ENCODE measurements at regions of chr15 and their contacts with region 1.

Region 1: GRCh38 chr15:84658080-84658787 is at the start of gene NMB:
- DNase-seq: peak; percentile 68 to 93 (median 83)
- ATAC-seq: peak; percentile 66
- H3K4me3 ChIP-seq: peak within 1 kb of the TSS; percentile 58 to 60
- H3K4me3 Mint-ChIP-seq: peak within 1 kb of the TSS; percentile 80
- H3K27ac ChIP-seq: peak within 1 kb of the TSS; percentile 39 to 75
- H3K27ac Mint-ChIP-seq: peak within 1 kb of the TSS; percentile 72
- H3K4me1 ChIP-seq: peaks cover 24% of the 10 kb centered on the region
- H3K4me1 Mint-ChIP-seq: peaks cover 33% of the 10 kb centered on the region
- H3K27me3 ChIP-seq: no peaks in the 10 kb centered on the region
- H3K27me3 Mint-ChIP-seq: no peaks in the 10 kb centered on the region
- CTCF ChIP-seq: peak; percentile 70
- total RNA-seq, gene NMB: 1.8 to 2.0 TPM

Region 2: DNA sequence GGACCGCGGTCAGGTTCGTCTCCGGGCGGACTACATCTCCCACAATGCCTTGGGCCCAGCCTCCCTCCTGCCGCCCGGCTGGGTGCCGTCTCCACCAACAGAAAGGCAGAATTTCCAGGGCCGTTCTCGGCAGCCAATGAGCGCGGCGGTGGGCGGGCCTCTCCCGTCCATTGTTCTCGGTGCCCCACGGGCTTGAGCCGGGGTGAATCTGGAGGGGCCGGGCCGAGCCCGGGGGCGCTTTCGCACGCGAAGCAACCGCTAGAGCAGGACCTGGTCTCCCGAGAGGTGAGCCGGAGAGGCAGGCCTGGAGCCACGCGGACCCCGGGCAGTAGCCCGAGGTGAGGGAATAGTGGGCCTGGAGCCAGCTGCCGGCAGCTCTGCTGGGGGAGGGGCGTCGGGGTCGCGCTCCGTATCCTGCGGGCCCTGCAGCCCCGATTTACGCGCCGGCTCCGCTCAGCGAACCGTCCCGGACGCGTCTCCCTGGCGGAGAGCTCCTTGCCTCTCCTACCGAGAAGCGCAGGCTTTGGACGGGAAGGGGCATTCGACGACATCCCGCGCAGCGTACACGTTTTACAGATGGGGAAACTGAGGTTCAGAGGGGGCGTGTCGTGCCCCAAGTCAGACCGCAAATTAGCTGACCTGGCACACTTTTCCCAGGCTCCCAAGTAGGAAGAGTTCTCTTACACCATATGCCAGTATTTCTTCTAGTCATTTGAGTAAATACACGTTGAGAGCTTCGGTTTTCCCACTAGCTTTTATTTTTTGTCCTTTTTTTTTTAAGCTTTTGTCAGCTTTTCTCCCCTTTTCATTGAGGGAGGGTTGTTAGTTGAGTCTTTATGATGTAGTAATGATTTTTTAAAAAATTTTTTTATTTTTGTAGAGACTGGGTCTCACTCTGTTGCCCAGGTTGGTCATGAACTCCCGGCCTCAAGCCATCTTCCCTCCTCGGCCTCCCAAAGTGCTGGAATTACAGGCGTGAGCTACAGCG is 57.1 kb before region 1 on chr15 and contains the start of gene ZSCAN2:
- CTCF ChIA-PET with region 1: interaction called, 19 read pairs
- POLR2A ChIA-PET with region 1: interaction called, 12 read pairs
- intact Hi-C with region 1: loop called (anchors 1 kb)
- DNase-seq: peak; percentile 81 to 95 (median 92)
- ATAC-seq: peak; percentile 95
- H3K4me3 ChIP-seq: peak within 1 kb of the TSS; percentile 93 to 100
- H3K4me3 Mint-ChIP-seq: peak within 1 kb of the TSS; percentile 99
- H3K27ac ChIP-seq: peak within 1 kb of the TSS; percentile 34 to 58
- H3K27ac Mint-ChIP-seq: peak within 1 kb of the TSS; percentile 93
- H3K4me1 ChIP-seq: peaks cover 42% of the 10 kb centered on the region
- H3K4me1 Mint-ChIP-seq: peaks cover 74% of the 10 kb centered on the region
- H3K27me3 ChIP-seq: no peaks in the 10 kb centered on the region
- H3K27me3 Mint-ChIP-seq: no peaks in the 10 kb centered on the region
- CTCF ChIP-seq: no peak
- total RNA-seq, gene ZSCAN2: 2.7 to 4.4 TPM

Region 3: DNA sequence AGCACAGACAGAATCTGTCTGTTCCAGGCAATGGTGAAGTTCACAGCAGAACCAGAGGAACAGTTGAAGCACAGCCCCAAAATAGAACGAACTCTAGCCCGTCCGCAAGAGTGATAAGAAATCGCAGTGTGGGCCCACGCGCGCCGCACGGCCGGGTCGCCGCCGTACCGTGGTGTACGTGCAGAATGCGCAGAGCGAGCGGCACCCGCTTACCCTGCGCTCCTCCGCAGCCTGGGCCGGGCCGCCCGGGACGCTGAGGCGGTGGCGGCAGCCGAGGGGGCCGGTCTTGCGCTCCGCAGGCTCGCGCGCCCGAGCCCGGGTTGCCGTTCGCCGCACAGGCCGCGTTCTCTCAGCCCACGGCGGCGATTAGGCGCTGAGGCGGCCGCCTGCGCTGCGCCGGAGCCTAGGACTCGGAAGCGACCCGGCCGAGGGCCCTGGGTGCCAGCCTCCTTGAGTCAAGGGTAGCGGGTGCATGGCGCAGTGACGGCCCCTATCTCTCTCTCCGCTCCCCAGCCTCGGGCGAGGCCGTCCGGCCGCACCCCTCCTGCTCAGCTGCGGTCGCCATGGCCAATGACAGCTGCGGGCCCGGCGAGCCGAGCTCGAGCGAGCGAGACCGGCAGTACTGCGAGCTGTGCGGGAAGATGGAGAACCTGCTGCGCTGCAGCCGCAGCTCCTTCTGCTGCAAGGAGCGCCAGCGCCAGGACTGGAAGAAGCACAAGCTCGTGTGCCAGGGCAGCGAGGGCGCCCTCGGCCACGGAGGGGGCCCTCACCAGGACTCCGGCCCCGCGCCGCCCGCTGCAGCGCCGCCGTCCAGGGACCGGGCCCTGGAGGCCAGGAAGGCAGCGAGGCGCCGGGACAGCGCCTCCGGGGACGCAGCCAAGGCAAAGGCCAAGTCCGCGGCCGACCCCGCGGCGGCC is 24.7 kb before region 1 on chr15:
- CTCF ChIA-PET with region 1: interaction called, 9 read pairs
- POLR2A ChIA-PET with region 1: interaction called, 20 read pairs
- intact Hi-C with region 1: loop called (anchors 1 kb)
- DNase-seq: peak; percentile 29 to 84 (median 63)
- ATAC-seq: peak; percentile 41
- H3K4me3 ChIP-seq: peak overlapping the region; percentile 63 to 77
- H3K4me3 Mint-ChIP-seq: peak overlapping the region; percentile 93
- H3K27ac ChIP-seq: peak overlapping the region; percentile 51 to 74
- H3K27ac Mint-ChIP-seq: peak overlapping the region; percentile 96
- H3K4me1 ChIP-seq: peaks cover 33% of the 10 kb centered on the region
- H3K4me1 Mint-ChIP-seq: peaks cover 50% of the 10 kb centered on the region
- H3K27me3 ChIP-seq: no peaks in the 10 kb centered on the region
- H3K27me3 Mint-ChIP-seq: no peaks in the 10 kb centered on the region
- CTCF ChIP-seq: no peak

Region 4: DNA sequence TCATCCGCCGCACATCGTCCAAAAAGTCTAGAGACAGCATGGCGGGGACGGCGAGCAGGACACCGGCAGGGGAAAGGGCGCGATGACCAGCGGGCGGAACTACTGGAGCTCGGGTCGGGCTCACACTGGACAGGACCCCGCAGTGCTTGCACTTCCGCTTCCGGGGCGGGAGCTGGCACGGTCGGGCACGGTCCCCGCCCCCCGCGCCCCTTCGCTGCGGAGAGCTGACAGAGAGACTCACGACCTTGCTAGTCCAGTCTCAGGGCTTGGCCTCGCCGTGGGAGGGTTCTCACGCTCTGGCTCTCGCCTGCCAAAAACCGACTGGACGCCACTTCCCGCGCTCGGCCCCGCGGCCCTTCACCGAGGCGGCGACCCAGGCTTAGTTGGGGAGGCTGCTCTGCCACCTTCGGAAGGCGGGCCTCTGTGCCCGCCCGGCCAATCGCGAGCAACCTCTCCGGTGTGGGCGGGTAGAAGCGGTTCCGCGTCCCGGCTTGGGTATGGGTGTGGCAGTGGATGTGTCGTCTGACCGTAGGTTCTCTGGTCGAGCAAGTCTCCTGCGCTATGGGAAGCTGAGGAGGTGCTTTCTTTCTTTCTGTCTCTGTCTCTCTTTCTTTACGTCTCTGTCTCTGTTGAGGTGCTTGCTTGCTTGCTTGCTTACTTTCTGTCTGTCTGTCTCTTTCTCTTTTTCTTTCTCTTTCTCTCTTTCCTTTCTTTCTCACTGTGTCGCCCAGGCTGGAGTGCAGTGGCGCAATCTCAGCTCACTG is 58.0 kb after region 1 on chr15 and contains the start of gene SEC11A:
- CTCF ChIA-PET with region 1: interaction called, 8 read pairs
- POLR2A ChIA-PET with region 1: interaction called, 10 read pairs
- intact Hi-C with region 1: loop called (anchors 1 kb)
- DNase-seq: peak; percentile 84 to 95 (median 90)
- ATAC-seq: peak; percentile 94
- H3K4me3 ChIP-seq: peak within 1 kb of the TSS; percentile 94 to 98
- H3K4me3 Mint-ChIP-seq: peak within 1 kb of the TSS; percentile 96
- H3K27ac ChIP-seq: peak within 1 kb of the TSS; percentile 74 to 86
- H3K27ac Mint-ChIP-seq: peak within 1 kb of the TSS; percentile 97
- H3K4me1 ChIP-seq: peaks cover 37% of the 10 kb centered on the region
- H3K4me1 Mint-ChIP-seq: peaks cover 44% of the 10 kb centered on the region
- H3K27me3 ChIP-seq: no peaks in the 10 kb centered on the region
- H3K27me3 Mint-ChIP-seq: no peaks in the 10 kb centered on the region
- CTCF ChIP-seq: no peak
- total RNA-seq, gene SEC11A: 36.4 to 38.5 TPM

Region 5: DNA sequence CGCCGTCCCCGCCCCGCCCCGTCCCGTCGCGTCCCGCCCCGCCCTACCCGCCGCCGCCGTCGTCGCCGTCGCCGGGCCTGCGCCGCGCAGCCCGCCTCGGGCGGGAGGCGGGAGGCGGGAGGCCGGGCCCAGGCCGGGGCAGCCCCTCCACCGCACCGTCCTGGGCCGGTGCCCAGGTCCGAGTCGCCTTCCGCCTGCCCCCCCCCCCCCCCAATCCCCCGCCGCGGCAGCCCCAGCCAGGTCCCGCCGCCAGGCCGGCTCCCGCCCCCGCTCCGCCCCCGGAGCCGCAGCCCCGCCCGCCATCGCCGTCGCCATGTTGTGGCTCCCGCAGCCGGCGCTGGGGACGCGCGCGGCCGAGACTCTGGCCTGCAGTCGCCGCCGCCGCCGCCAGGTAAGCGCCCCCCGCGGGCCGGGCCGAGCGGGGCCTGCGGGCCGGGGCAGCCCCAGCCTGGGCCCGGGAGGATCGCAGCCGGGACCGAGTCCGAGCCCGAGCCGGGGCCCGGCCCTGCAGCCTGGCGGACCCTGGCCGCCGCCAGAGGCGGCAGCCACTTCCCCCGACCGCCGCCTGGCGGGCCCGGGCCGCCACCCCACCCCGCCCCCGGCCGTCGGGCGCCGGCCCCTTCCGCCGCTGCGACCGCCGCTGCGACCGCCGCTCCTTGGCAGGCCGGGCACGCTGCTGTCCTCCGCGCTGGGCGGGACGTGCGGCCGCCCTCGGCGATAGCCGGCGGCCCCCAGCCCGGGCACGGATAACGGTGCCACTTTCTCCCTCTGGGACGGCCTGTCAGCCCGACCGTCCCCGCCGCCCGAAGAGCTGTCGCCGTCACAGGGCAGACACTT is 90.3 kb after region 1 on chr15 and contains the start of gene ZNF592:
- CTCF ChIA-PET with region 1: interaction called, 11 read pairs
- POLR2A ChIA-PET with region 1: interaction called, 14 read pairs
- intact Hi-C with region 1: loop called (anchors 1 kb)
- DNase-seq: peak; percentile 63 to 90 (median 80)
- ATAC-seq: peak; percentile 67
- H3K4me3 ChIP-seq: peak within 1 kb of the TSS; percentile 74 to 90
- H3K4me3 Mint-ChIP-seq: peak within 1 kb of the TSS; percentile 99
- H3K27ac ChIP-seq: peak within 1 kb of the TSS; percentile 82 to 94
- H3K27ac Mint-ChIP-seq: peak within 1 kb of the TSS; percentile 100
- H3K4me1 ChIP-seq: peaks cover 46% of the 10 kb centered on the region
- H3K4me1 Mint-ChIP-seq: peaks cover 72% of the 10 kb centered on the region
- H3K27me3 ChIP-seq: no peaks in the 10 kb centered on the region
- H3K27me3 Mint-ChIP-seq: no peaks in the 10 kb centered on the region
- CTCF ChIP-seq: no peak
- total RNA-seq, gene ZNF592: 24.6 to 25.1 TPM

Region 6: GRCh38 chr15:84833447-84834228 is 175.4 kb after region 1 on chr15:
- CTCF ChIA-PET with region 1: no interaction called
- POLR2A ChIA-PET with region 1: no interaction called
- intact Hi-C with region 1: no loop called
- DNase-seq: no peak
- ATAC-seq: no peak
- H3K4me3 ChIP-seq: no peak overlapping the region
- H3K4me3 Mint-ChIP-seq: no peak overlapping the region
- H3K27ac ChIP-seq: no peak overlapping the region
- H3K27ac Mint-ChIP-seq: no peak overlapping the region
- H3K4me1 ChIP-seq: no peaks in the 10 kb centered on the region
- H3K4me1 Mint-ChIP-seq: no peaks in the 10 kb centered on the region
- H3K27me3 ChIP-seq: no peaks in the 10 kb centered on the region
- H3K27me3 Mint-ChIP-seq: peaks cover 4% of the 10 kb centered on the region
- CTCF ChIP-seq: no peak

Region 7: DNA sequence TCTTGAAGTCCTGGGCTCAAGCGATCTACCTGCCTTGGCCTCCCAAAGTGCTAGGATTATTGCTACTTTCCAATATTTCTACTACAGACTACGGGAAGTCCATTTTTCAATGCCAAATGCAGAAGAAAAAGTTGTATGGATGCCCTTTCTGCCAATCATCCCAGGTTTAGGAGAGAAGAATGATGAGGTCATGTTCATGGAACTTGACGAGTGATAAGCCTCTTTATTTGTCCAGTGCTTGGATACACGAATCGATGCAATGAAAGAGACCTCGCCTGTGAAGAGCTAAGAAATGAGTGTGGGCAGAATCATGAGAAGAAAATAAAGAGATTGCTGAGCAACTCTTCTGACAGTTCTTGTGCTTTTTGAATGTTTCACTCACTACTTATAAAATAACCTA is 225.2 kb after region 1 on chr15:
- CTCF ChIA-PET with region 1: interaction called, 6 read pairs
- POLR2A ChIA-PET with region 1: no interaction called
- intact Hi-C with region 1: loop called (anchors 1 kb)
- DNase-seq: no peak
- ATAC-seq: no peak
- H3K4me3 ChIP-seq: no peak overlapping the region
- H3K4me3 Mint-ChIP-seq: no peak overlapping the region
- H3K27ac ChIP-seq: no peak overlapping the region
- H3K27ac Mint-ChIP-seq: no peak overlapping the region
- H3K4me1 ChIP-seq: no peaks in the 10 kb centered on the region
- H3K4me1 Mint-ChIP-seq: no peaks in the 10 kb centered on the region
- H3K27me3 ChIP-seq: no peaks in the 10 kb centered on the region
- H3K27me3 Mint-ChIP-seq: no peaks in the 10 kb centered on the region
- CTCF ChIP-seq: no peak

Region 8: GRCh38 chr15:84929744-84930371 is 271.6 kb after region 1 on chr15:
- CTCF ChIA-PET with region 1: interaction called, 8 read pairs
- POLR2A ChIA-PET with region 1: no interaction called
- intact Hi-C with region 1: loop called (anchors 1 kb)
- DNase-seq: no peak
- ATAC-seq: no peak
- H3K4me3 ChIP-seq: no peak overlapping the region
- H3K4me3 Mint-ChIP-seq: no peak overlapping the region
- H3K27ac ChIP-seq: no peak overlapping the region
- H3K27ac Mint-ChIP-seq: no peak overlapping the region
- H3K4me1 ChIP-seq: no peaks in the 10 kb centered on the region
- H3K4me1 Mint-ChIP-seq: peaks cover 5% of the 10 kb centered on the region
- H3K27me3 ChIP-seq: no peaks in the 10 kb centered on the region
- H3K27me3 Mint-ChIP-seq: no peaks in the 10 kb centered on the region
- CTCF ChIP-seq: no peak

Region 9: GRCh38 chr15:84944311-84944710 is 286.1 kb after region 1 on chr15:
- CTCF ChIA-PET with region 1: no interaction called
- POLR2A ChIA-PET with region 1: no interaction called
- intact Hi-C with region 1: no loop called
- DNase-seq: no peak
- ATAC-seq: no peak
- H3K4me3 ChIP-seq: no peak overlapping the region
- H3K4me3 Mint-ChIP-seq: no peak overlapping the region
- H3K27ac ChIP-seq: no peak overlapping the region
- H3K27ac Mint-ChIP-seq: no peak overlapping the region
- H3K4me1 ChIP-seq: no peaks in the 10 kb centered on the region
- H3K4me1 Mint-ChIP-seq: no peaks in the 10 kb centered on the region
- H3K27me3 ChIP-seq: no peaks in the 10 kb centered on the region
- H3K27me3 Mint-ChIP-seq: no peaks in the 10 kb centered on the region
- CTCF ChIP-seq: no peak

Region 10: DNA sequence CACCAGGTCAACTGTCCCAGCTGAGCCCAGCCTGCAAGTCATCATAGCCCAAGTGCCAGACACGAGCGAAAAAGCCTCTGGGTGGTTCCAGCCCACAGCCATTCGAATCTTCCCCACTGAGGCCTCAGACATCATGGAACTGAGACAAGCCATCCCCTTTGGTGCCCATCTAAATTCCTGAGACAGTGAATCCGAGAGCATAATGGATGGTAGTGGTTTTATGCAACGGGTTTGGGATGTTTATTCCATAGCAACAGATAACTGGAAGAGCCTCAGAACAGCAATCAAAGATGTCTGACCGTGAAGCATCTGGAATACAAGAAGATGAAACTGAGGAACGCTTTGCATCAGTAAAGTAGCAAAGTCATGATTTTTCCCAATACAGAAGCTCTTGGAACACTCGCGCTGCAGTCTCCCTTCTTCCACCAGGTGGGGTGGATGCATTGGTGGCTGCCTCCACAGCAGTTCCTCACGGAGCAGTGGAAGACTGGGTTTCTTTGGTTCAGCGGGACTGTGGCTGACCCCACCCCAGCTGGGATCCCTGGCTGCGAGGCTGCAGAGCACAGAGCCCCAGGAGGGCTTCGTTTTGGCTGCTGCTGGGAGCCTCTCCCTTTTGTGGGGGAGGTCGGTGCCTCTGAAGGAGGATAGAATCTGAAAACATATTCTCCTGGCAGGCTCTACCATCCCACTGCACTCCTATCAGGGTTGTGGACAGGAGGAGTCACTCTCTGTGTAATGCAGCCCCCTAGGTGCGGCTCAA is 297.0 kb after region 1 on chr15:
- CTCF ChIA-PET with region 1: no interaction called
- POLR2A ChIA-PET with region 1: no interaction called
- intact Hi-C with region 1: no loop called
- DNase-seq: peak in 8 of 9 experiments; percentile 5 to 60 (median 48)
- ATAC-seq: peak; percentile 49
- H3K4me3 ChIP-seq: no peak overlapping the region
- H3K4me3 Mint-ChIP-seq: no peak overlapping the region
- H3K27ac ChIP-seq: no peak overlapping the region
- H3K27ac Mint-ChIP-seq: no peak overlapping the region
- H3K4me1 ChIP-seq: no peaks in the 10 kb centered on the region
- H3K4me1 Mint-ChIP-seq: peaks cover 8% of the 10 kb centered on the region
- H3K27me3 ChIP-seq: no peaks in the 10 kb centered on the region
- H3K27me3 Mint-ChIP-seq: peaks cover 12% of the 10 kb centered on the region
- CTCF ChIP-seq: peak; percentile 61

Region 11: DNA sequence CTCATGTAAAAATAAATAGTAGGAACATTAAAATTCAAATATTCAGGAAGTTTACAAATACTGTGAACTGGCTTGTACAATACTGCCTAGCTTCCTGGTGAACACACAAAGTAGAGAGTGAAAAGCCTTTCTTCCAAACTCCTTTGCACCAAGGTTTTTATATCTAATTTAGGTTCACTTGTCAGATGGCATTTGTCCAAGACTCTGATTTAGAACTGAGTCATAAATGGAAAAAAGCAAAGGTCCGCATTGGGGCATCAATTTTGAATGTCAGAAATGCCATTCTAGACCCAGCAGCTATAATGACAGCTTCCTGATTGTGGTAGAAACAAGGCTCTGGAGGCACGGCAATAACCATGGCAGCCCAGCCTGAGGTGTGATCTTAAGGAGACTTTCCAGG is 484.1 kb after region 1 on chr15:
- CTCF ChIA-PET with region 1: no interaction called
- POLR2A ChIA-PET with region 1: no interaction called
- intact Hi-C with region 1: no loop called
- DNase-seq: no peak
- ATAC-seq: no peak
- H3K4me3 ChIP-seq: no peak overlapping the region
- H3K4me3 Mint-ChIP-seq: no peak overlapping the region
- H3K27ac ChIP-seq: no peak overlapping the region
- H3K27ac Mint-ChIP-seq: no peak overlapping the region
- H3K4me1 ChIP-seq: no peaks in the 10 kb centered on the region
- H3K4me1 Mint-ChIP-seq: no peaks in the 10 kb centered on the region
- H3K27me3 ChIP-seq: no peaks in the 10 kb centered on the region
- H3K27me3 Mint-ChIP-seq: no peaks in the 10 kb centered on the region
- CTCF ChIP-seq: no peak

Measured in CD8-positive, alpha-beta T cell (primary cell).